CD8-positive, alpha-beta T cell (primary cell): ENCODE measurements at regions of chr14 and their contacts with region 1.

Region 1: GRCh38 chr14:65164068-65164824 is 61.9 kb upstream of the MAX start:
- DNase-seq: peak in 6 of 9 experiments; percentile 5 to 69 (median 37)
- ATAC-seq: peak; percentile 48
- H3K4me3 ChIP-seq: no peak overlapping the region
- H3K4me3 Mint-ChIP-seq: no peak overlapping the region
- H3K27ac ChIP-seq: no peak overlapping the region
- H3K27ac Mint-ChIP-seq: no peak overlapping the region
- H3K4me1 ChIP-seq: no peaks in the 10 kb centered on the region
- H3K4me1 Mint-ChIP-seq: no peaks in the 10 kb centered on the region
- H3K27me3 ChIP-seq: no peaks in the 10 kb centered on the region
- H3K27me3 Mint-ChIP-seq: no peaks in the 10 kb centered on the region
- CTCF ChIP-seq: peak; percentile 76

Region 2: GRCh38 chr14:65184032-65184764 is 20.0 kb after region 1 on chr14:
- CTCF ChIA-PET with region 1: interaction called, 10 read pairs
- POLR2A ChIA-PET with region 1: interaction called, 6 read pairs
- intact Hi-C with region 1: no loop called
- DNase-seq: no peak
- ATAC-seq: no peak
- H3K4me3 ChIP-seq: no peak overlapping the region
- H3K4me3 Mint-ChIP-seq: no peak overlapping the region
- H3K27ac ChIP-seq: no peak overlapping the region
- H3K27ac Mint-ChIP-seq: no peak overlapping the region
- H3K4me1 ChIP-seq: no peaks in the 10 kb centered on the region
- H3K4me1 Mint-ChIP-seq: no peaks in the 10 kb centered on the region
- H3K27me3 ChIP-seq: no peaks in the 10 kb centered on the region
- H3K27me3 Mint-ChIP-seq: peaks cover 5% of the 10 kb centered on the region
- CTCF ChIP-seq: no peak

Region 3: GRCh38 chr14:65604936-65605335 is 440.7 kb after region 1 on chr14:
- CTCF ChIA-PET with region 1: no interaction called
- POLR2A ChIA-PET with region 1: no interaction called
- intact Hi-C with region 1: loop called in 1 of 2 experiments (anchors 5 kb)
- DNase-seq: peak in 1 of 9 experiments; percentile 7
- ATAC-seq: no peak
- H3K4me3 ChIP-seq: no peak overlapping the region
- H3K4me3 Mint-ChIP-seq: no peak overlapping the region
- H3K27ac ChIP-seq: no peak overlapping the region
- H3K27ac Mint-ChIP-seq: no peak overlapping the region
- H3K4me1 ChIP-seq: no peaks in the 10 kb centered on the region
- H3K4me1 Mint-ChIP-seq: peaks cover 11% of the 10 kb centered on the region
- H3K27me3 ChIP-seq: no peaks in the 10 kb centered on the region
- H3K27me3 Mint-ChIP-seq: no peaks in the 10 kb centered on the region
- CTCF ChIP-seq: no peak

Region 4: DNA sequence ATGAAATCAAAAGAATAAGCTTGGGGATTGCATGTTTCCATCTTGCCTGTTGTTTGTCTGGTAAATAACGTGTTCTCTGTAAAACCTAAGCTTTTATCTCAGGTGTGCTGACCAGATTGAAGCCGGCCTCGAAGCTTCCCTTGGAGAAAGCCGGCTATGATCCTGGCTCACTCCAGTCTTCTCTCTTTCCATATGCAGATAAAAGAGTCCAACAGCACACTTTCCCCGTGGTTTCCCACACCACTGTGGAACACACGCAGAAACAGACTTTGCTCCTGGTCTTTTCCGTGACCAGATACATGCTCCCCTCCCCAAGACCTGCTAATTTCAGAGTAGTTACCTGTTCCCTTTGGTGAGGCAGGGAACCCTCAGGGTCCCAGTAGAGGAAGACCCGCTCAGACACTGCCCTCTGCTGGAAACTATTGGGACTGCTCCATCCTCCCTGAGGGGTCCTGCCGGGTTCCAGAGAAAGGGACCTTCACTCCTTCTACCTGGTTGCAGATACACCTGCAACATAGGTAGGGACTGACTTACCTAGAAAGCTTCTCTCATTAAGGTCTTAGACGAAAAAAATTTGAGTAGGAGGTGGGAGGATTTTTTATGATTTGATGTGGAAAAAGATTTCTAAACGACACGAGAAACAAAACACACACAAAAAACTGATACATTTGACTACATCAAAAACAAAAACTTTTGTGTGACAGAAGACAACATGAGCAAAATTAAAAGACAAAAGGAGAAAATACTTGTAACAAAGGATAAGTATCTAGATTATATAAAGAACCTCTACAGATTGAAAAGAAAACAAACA is 906.5 kb after region 1 on chr14:
- CTCF ChIA-PET with region 1: interaction called, 52 read pairs
- POLR2A ChIA-PET with region 1: no interaction called
- intact Hi-C with region 1: loop called (anchors 1 kb)
- DNase-seq: peak; percentile 47 to 86 (median 73)
- ATAC-seq: peak; percentile 89
- H3K4me3 ChIP-seq: no peak overlapping the region
- H3K4me3 Mint-ChIP-seq: no peak overlapping the region
- H3K27ac ChIP-seq: no peak overlapping the region
- H3K27ac Mint-ChIP-seq: no peak overlapping the region
- H3K4me1 ChIP-seq: no peaks in the 10 kb centered on the region
- H3K4me1 Mint-ChIP-seq: peaks cover 2% of the 10 kb centered on the region
- H3K27me3 ChIP-seq: no peaks in the 10 kb centered on the region
- H3K27me3 Mint-ChIP-seq: no peaks in the 10 kb centered on the region
- CTCF ChIP-seq: peak; percentile 99

Region 5: DNA sequence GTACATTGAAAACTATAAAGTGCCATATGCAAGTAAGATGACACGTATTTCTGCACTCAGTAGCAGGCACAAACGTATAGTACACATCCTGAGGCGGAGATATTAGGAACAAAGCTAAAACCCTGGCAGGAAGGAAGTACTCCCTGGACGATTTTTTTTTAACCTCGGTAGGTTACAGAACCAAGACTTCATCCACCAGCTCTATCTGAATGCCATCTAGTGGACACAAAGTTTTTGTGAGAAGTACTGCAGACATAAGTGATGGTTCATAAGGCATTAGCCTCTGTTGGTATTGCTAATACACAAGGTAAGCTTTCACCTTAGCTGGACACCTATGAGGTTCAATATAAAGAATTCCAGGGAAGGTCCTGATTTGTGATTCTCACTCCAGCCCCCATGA is 1238.9 kb after region 1 on chr14:
- CTCF ChIA-PET with region 1: no interaction called
- POLR2A ChIA-PET with region 1: no interaction called
- intact Hi-C with region 1: loop called in 1 of 2 experiments (anchors 10 kb)
- DNase-seq: peak in 2 of 9 experiments; percentile 29 to 51
- ATAC-seq: no peak
- H3K4me3 ChIP-seq: no peak overlapping the region
- H3K4me3 Mint-ChIP-seq: no peak overlapping the region
- H3K27ac ChIP-seq: no peak overlapping the region
- H3K27ac Mint-ChIP-seq: no peak overlapping the region
- H3K4me1 ChIP-seq: no peaks in the 10 kb centered on the region
- H3K4me1 Mint-ChIP-seq: no peaks in the 10 kb centered on the region
- H3K27me3 ChIP-seq: no peaks in the 10 kb centered on the region
- H3K27me3 Mint-ChIP-seq: no peaks in the 10 kb centered on the region
- CTCF ChIP-seq: no peak